Common myeloid progenitor, CD34-positive (primary cell): ENCODE measurements at regions of chr12 and their contacts with region 1.

Region 1: GRCh38 chr12:124567661-124568373 is 405 bp upstream of the NCOR2 start:
- DNase-seq: peak; percentile 80 to 90 (median 82)
- H3K4me3 ChIP-seq: peak overlapping the region; percentile 43 to 84 (median 65)
- H3K27ac ChIP-seq: peak overlapping the region in 1 of 2 experiments; percentile 73
- H3K4me1 ChIP-seq: peaks cover 5 to 52% (median 43%) of the 10 kb centered on the region in 4 experiments
- H3K27me3 ChIP-seq: no peaks in the 10 kb centered on the region

Region 2: GRCh38 chr12:124518051-124518932 is 49.5 kb before region 1 on chr12:
- CTCF ChIA-PET with region 1: interaction called, 11 read pairs
- POLR2A ChIA-PET with region 1: interaction called, 7 read pairs
- DNase-seq: peak; percentile 86 to 93 (median 92)
- H3K4me3 ChIP-seq: peak overlapping the region in 3 of 7 experiments; percentile 32 to 66 (median 59)
- H3K27ac ChIP-seq: peak overlapping the region in 1 of 2 experiments; percentile 71
- H3K4me1 ChIP-seq: peaks cover 0 to 72% (median 71%) of the 10 kb centered on the region in 4 experiments
- H3K27me3 ChIP-seq: no peaks in the 10 kb centered on the region

Region 3: GRCh38 chr12:124527861-124528561 is 39.8 kb before region 1 on chr12:
- CTCF ChIA-PET with region 1: interaction called, 18 read pairs
- POLR2A ChIA-PET with region 1: no interaction called
- DNase-seq: no peak
- H3K4me3 ChIP-seq: no peak overlapping the region
- H3K27ac ChIP-seq: no peak overlapping the region
- H3K4me1 ChIP-seq: peaks cover 0 to 30% (median 19%) of the 10 kb centered on the region in 4 experiments
- H3K27me3 ChIP-seq: no peaks in the 10 kb centered on the region

Region 4: GRCh38 chr12:124551268-124552144 is 16.3 kb before region 1 on chr12:
- CTCF ChIA-PET with region 1: interaction called, 62 read pairs
- POLR2A ChIA-PET with region 1: interaction called, 15 read pairs
- DNase-seq: peak in 2 of 3 donors; percentile 76 to 85
- H3K4me3 ChIP-seq: peak overlapping the region in 3 of 7 experiments; percentile 14 to 19 (median 15)
- H3K27ac ChIP-seq: peak overlapping the region; percentile 46 to 78
- H3K4me1 ChIP-seq: peaks cover 5 to 87% (median 79%) of the 10 kb centered on the region in 4 experiments
- H3K27me3 ChIP-seq: no peaks in the 10 kb centered on the region